ENCODE measurements at regions of chr15 and their contacts with region 1.

Region 1: GRCh38 chr15:31489801-31490646 is 163.4 kb downstream of the KLF13 start:
- DNase-seq: peak in 1 of 4 donors; percentile 47
- ATAC-seq: peak; percentile 77
- H3K4me3 ChIP-seq: no peak overlapping the region
- H3K27ac ChIP-seq: no peak overlapping the region
- H3K4me1 ChIP-seq: peaks cover 8 to 26% of the 10 kb centered on the region in 2 donors
- H3K27me3 ChIP-seq: peaks cover 0 to 14% of the 10 kb centered on the region in 2 donors
- CTCF ChIP-seq: peak; percentile 86 to 94

Region 2: DNA sequence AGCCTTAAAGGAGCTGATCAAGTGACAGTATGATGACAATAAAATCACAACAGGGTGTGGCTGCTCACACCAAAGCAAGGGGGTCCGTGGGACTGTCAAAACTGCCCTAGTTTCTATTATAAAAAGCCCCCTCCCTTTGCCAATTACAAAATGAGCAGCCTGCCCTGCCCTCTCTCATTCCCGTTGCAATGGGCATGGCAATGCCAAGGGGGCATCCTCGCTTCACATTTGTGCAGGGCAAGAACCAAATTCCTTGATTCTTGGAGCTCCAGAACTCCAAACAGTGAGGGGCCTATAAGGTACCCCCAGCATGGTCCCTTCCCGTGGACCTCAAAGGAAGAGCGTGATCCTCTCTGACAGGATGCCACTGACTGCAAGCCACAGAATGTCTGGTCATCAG is 283.6 kb before region 1 on chr15:
- intact Hi-C with region 1: loop called in 1 of 2 experiments (anchors 5 kb)
- DNase-seq: peak in 1 of 4 donors; percentile 27
- ATAC-seq: no peak
- H3K4me3 ChIP-seq: no peak overlapping the region
- H3K27ac ChIP-seq: no peak overlapping the region
- H3K4me1 ChIP-seq: no peaks in the 10 kb centered on the region
- H3K27me3 ChIP-seq: no peaks in the 10 kb centered on the region
- CTCF ChIP-seq: no peak

Region 3: GRCh38 chr15:31344823-31345605 is 145.0 kb before region 1 on chr15:
- intact Hi-C with region 1: no loop called
- DNase-seq: peak in 1 of 4 donors; percentile 36
- ATAC-seq: peak; percentile 23
- H3K4me3 ChIP-seq: peak overlapping the region in 1 of 2 donors; percentile 6
- H3K27ac ChIP-seq: peak overlapping the region; percentile 33 to 85
- H3K4me1 ChIP-seq: peaks cover 45 to 99% of the 10 kb centered on the region in 2 donors
- H3K27me3 ChIP-seq: no peaks in the 10 kb centered on the region
- CTCF ChIP-seq: no peak